ENCODE measurements at regions of chr5 and their contacts with region 1.

Region 1: GRCh38 chr5:138449501-138450239 is 10.8 kb downstream of the REEP2 start:
- DNase-seq: peak; percentile 69
- H3K4me3 Mint-ChIP-seq: peak overlapping the region; percentile 39
- H3K27ac Mint-ChIP-seq: peak overlapping the region; percentile 19
- H3K4me1 Mint-ChIP-seq: peaks cover 6% of the 10 kb centered on the region
- H3K27me3 Mint-ChIP-seq: peaks cover 2% of the 10 kb centered on the region

Region 2: GRCh38 chr5:138503487-138504270 is 54.0 kb after region 1 on chr5:
- intact Hi-C with region 1: loop called (anchors 1 kb)
- DNase-seq: no peak
- H3K4me3 Mint-ChIP-seq: no peak overlapping the region
- H3K27ac Mint-ChIP-seq: no peak overlapping the region
- H3K4me1 Mint-ChIP-seq: peaks cover 3% of the 10 kb centered on the region
- H3K27me3 Mint-ChIP-seq: no peaks in the 10 kb centered on the region